Gastrocnemius medialis (tissue), 4 donors: ENCODE measurements at regions of chr10 and their contacts with region 1.

Region 1: GRCh38 chr10:132452631-132453469 is 55.9 kb downstream of the PWWP2B start:
- DNase-seq: peak; percentile 36 to 71
- ATAC-seq: peak; percentile 31 to 68
- H3K4me3 ChIP-seq: peak overlapping the region in 3 of 4 donors; percentile 3 to 43 (median 37)
- H3K27ac ChIP-seq: peak overlapping the region in 1 of 4 donors; percentile 11
- H3K4me1 ChIP-seq: peaks cover 8 to 15% of the 10 kb centered on the region in 2 donors
- H3K27me3 ChIP-seq: no peaks in the 10 kb centered on the region
- CTCF ChIP-seq: peak; percentile 90 to 99 (median 98)
- POLR2A ChIP-seq: no peak

Region 2: GRCh38 chr10:132223156-132223590 is 229.7 kb before region 1 on chr10:
- in situ Hi-C with region 1: loop called in 2 of 4 experiments (anchors 10 to 25 kb)
- intact Hi-C with region 1: loop called (anchors 2 kb)
- DNase-seq: peak; percentile 53 to 60
- ATAC-seq: peak; percentile 86 to 94
- H3K4me3 ChIP-seq: no peak overlapping the region
- H3K27ac ChIP-seq: no peak overlapping the region
- H3K4me1 ChIP-seq: no peaks in the 10 kb centered on the region
- H3K27me3 ChIP-seq: no peaks in the 10 kb centered on the region
- CTCF ChIP-seq: peak; percentile 81 to 95 (median 85)
- POLR2A ChIP-seq: no peak

Region 3: DNA sequence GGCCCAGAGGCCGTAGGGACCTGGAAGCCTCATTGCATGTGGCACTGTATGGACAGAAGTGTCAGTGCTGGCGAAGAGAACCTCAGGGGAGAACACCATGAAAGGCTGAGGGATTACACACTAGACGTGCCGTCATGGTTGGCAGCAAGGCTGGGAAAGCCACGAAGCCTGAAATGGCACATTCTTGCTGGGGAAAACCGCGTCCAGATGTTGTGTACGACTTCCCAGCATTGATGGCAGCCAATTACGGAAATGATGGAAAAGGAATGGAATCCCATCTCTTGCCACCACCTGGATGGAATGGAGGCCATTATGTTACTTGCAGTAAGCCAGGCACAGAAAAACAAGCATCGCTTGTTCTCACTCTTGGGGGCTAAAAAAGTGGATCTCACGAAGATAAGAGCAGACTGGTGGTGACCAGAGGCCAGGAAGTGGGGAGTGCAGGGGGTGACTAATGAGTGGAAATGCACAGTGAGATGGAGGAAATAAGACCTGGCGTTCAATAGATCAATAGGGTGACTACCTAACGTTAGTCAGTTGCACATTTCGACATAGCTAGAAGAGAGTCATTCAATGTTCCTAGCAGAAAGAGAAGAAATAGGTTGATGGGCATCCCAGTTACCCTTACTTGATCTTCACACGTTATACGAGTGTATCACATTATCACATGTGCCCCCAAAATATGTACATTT is 70.5 kb before region 1 on chr10:
- in situ Hi-C with region 1: loop called in 3 of 4 experiments (anchors 5 kb)
- intact Hi-C with region 1: no loop called
- DNase-seq: no peak
- ATAC-seq: no peak
- H3K4me3 ChIP-seq: no peak overlapping the region
- H3K27ac ChIP-seq: no peak overlapping the region
- H3K4me1 ChIP-seq: no peaks in the 10 kb centered on the region
- H3K27me3 ChIP-seq: no peaks in the 10 kb centered on the region
- CTCF ChIP-seq: no peak
- POLR2A ChIP-seq: no peak

Region 4: GRCh38 chr10:132387764-132388210 is 65.1 kb before region 1 on chr10:
- in situ Hi-C with region 1: loop called in 3 of 4 experiments (anchors 5 kb)
- intact Hi-C with region 1: loop called (anchors 1 kb)
- DNase-seq: peak in 1 of 2 donors; percentile 48
- ATAC-seq: peak in 1 of 2 donors; percentile 45
- H3K4me3 ChIP-seq: no peak overlapping the region
- H3K27ac ChIP-seq: peak overlapping the region in 2 of 4 donors; percentile 26 to 57
- H3K4me1 ChIP-seq: peaks cover 0 to 10% of the 10 kb centered on the region in 2 donors
- H3K27me3 ChIP-seq: no peaks in the 10 kb centered on the region
- CTCF ChIP-seq: peak; percentile 48 to 81 (median 74)
- POLR2A ChIP-seq: no peak

Region 5: GRCh38 chr10:132396495-132397035 is 56.3 kb before region 1 on chr10:
- in situ Hi-C with region 1: no loop called
- intact Hi-C with region 1: loop called (anchors 1 kb)
- DNase-seq: peak in 1 of 2 donors; percentile 70
- ATAC-seq: peak; percentile 58 to 59
- H3K4me3 ChIP-seq: peak overlapping the region; percentile 69 to 72 (median 71)
- H3K27ac ChIP-seq: peak overlapping the region; percentile 88 to 98 (median 96)
- H3K4me1 ChIP-seq: peaks cover 19 to 38% of the 10 kb centered on the region in 2 donors
- H3K27me3 ChIP-seq: no peaks in the 10 kb centered on the region
- CTCF ChIP-seq: peak in 4 of 5 experiments; percentile 27 to 67 (median 50)
- POLR2A ChIP-seq: peak in 1 of 2 donors; percentile 74

Region 6: DNA sequence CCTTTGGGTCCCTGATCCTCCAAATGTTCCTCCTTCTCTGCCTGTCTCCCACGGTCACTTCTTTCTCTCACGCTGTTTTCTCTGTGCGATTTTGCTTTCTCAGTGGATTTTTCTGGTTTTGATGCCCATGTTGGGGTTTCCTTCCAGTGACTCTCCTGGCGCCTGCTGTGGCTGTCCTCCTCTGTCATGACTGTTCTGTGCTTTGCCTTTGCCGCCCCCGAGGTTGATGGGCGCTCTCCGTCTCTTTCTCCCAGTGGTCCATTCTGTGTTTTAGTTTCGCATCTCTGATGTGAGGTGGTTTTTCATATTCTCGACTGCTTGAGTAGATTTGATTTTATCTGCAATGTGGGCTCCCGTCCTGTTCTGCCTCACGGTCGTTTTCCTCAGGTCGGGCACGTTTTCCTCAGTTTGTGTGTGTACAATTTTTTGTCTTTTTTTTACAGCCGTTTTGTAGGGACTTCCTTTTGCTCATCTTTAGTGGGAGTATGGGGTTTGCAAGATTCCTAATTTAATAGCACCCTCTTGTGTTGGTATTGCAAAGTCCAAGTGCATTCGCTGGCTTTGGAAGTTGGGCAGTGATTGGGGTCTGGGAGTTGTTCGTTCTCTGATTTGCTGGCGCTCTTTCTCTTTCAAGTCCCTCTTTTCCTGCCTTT is 184.8 kb after region 1 on chr10:
- in situ Hi-C with region 1: loop called in 3 of 4 experiments (anchors 5 to 10 kb)
- intact Hi-C with region 1: loop called (anchors 1 kb)
- DNase-seq: peak in 1 of 2 donors; percentile 12
- ATAC-seq: peak; percentile 72 to 83
- H3K4me3 ChIP-seq: no peak overlapping the region
- H3K27ac ChIP-seq: no peak overlapping the region
- H3K4me1 ChIP-seq: peaks cover 14 to 23% of the 10 kb centered on the region in 2 donors
- H3K27me3 ChIP-seq: no peaks in the 10 kb centered on the region
- CTCF ChIP-seq: peak; percentile 56 to 78 (median 69)
- POLR2A ChIP-seq: no peak